Activated naive CD4-positive, alpha-beta T cell treated with anti-CD3 and anti-CD28 coated beads for 36 hours (primary cell): ENCODE measurements at regions of chr20 and their contacts with region 1.

Region 1: GRCh38 chr20:37384683-37385174 is 38.8 kb downstream of the SRC start:
- DNase-seq: peak; percentile 78
- H3K4me3 Mint-ChIP-seq: peak overlapping the region; percentile 65
- H3K27ac Mint-ChIP-seq: no peak overlapping the region
- H3K4me1 Mint-ChIP-seq: peaks cover 8% of the 10 kb centered on the region
- H3K27me3 Mint-ChIP-seq: peaks cover 4% of the 10 kb centered on the region

Region 2: DNA sequence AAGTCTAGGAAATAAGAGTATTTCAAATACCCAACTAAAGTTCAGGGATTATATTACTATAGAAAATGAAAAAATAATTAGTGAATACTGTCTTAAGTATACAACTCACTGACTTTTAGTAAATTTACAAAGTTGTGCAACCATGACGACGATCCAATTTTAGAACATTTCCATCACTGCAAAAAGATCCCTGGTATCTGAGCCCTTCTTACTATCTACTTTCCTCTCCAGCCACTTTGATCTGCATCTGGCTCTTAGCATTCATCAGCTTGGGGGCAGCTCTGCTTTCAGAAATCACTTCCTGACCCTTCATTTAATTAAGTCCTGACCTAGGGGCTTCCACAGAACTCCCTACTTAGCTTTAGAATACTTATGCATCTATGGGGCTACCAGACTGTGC is 250.8 kb before region 1 on chr20:
- CTCF ChIA-PET with region 1: no interaction called
- intact Hi-C with region 1: no loop called
- DNase-seq: no peak
- H3K4me3 Mint-ChIP-seq: no peak overlapping the region
- H3K27ac Mint-ChIP-seq: no peak overlapping the region
- H3K4me1 Mint-ChIP-seq: no peaks in the 10 kb centered on the region
- H3K27me3 Mint-ChIP-seq: no peaks in the 10 kb centered on the region

Region 3: GRCh38 chr20:37270576-37271420 is 113.9 kb before region 1 on chr20:
- CTCF ChIA-PET with region 1: interaction called, 40 read pairs
- intact Hi-C with region 1: loop called (anchors 1 kb)
- DNase-seq: no peak
- H3K4me3 Mint-ChIP-seq: no peak overlapping the region
- H3K27ac Mint-ChIP-seq: no peak overlapping the region
- H3K4me1 Mint-ChIP-seq: no peaks in the 10 kb centered on the region
- H3K27me3 Mint-ChIP-seq: no peaks in the 10 kb centered on the region

Region 4: GRCh38 chr20:37276494-37277252 is 108.1 kb before region 1 on chr20:
- CTCF ChIA-PET with region 1: interaction called, 11 read pairs
- intact Hi-C with region 1: loop called (anchors 2 kb)
- DNase-seq: peak; percentile 49
- H3K4me3 Mint-ChIP-seq: no peak overlapping the region
- H3K27ac Mint-ChIP-seq: no peak overlapping the region
- H3K4me1 Mint-ChIP-seq: peaks cover 7% of the 10 kb centered on the region
- H3K27me3 Mint-ChIP-seq: no peaks in the 10 kb centered on the region

Region 5: GRCh38 chr20:37564388-37565133 is 179.8 kb after region 1 on chr20:
- CTCF ChIA-PET with region 1: no interaction called
- intact Hi-C with region 1: no loop called
- DNase-seq: peak; percentile 39
- H3K4me3 Mint-ChIP-seq: no peak overlapping the region
- H3K27ac Mint-ChIP-seq: no peak overlapping the region
- H3K4me1 Mint-ChIP-seq: peaks cover 2% of the 10 kb centered on the region
- H3K27me3 Mint-ChIP-seq: peaks cover 37% of the 10 kb centered on the region